MCF 10A (cell line): ENCODE measurements at regions of chr11 and their contacts with region 1.

Region 1: DNA sequence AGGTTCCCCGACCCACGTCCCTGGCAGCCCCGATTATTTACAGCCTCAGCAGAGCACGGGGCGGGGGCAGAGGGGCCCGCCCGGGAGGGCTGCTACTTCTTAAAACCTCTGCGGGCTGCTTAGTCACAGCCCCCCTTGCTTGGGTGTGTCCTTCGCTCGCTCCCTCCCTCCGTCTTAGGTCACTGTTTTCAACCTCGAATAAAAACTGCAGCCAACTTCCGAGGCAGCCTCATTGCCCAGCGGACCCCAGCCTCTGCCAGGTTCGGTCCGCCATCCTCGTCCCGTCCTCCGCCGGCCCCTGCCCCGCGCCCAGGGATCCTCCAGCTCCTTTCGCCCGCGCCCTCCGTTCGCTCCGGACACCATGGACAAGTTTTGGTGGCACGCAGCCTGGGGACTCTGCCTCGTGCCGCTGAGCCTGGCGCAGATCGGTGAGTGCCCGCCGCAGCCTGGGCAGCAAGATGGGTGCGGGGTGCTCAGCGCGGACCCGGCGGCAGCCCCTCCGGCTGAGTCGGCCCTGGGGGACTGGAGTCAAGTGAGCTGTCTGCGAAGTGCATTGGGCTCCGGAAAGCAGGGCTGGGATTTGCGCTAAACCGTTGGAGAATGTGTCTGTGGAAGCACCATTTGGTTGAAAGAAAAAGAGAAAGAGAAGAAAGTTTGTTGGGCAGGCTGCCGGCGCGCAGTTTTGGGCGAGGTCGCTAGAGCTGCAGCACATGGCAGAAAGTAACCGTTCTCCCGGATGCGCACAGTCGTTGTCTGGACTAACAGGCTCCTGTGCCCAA is at the start of gene CD44:
- DNase-seq: peak; percentile 78
- H3K4me3 Mint-ChIP-seq: peak within 1 kb of the TSS; percentile 98
- H3K27ac Mint-ChIP-seq: peak within 1 kb of the TSS; percentile 92
- H3K4me1 Mint-ChIP-seq: peaks cover 36% of the 10 kb centered on the region
- H3K27me3 Mint-ChIP-seq: no peaks in the 10 kb centered on the region
- CTCF ChIP-seq: no peak
- total RNA-seq, gene CD44: 323 and 446 TPM in 2 replicates

Region 2: GRCh38 chr11:35006389-35007128 is 132.6 kb before region 1 on chr11:
- CTCF ChIA-PET with region 1: interaction called, 5 read pairs
- POLR2A ChIA-PET with region 1: interaction called, 43 read pairs
- intact Hi-C with region 1: no loop called
- DNase-seq: no peak
- H3K4me3 Mint-ChIP-seq: no peak overlapping the region
- H3K27ac Mint-ChIP-seq: no peak overlapping the region
- H3K4me1 Mint-ChIP-seq: peaks cover 20% of the 10 kb centered on the region
- H3K27me3 Mint-ChIP-seq: no peaks in the 10 kb centered on the region
- CTCF ChIP-seq: no peak

Region 3: DNA sequence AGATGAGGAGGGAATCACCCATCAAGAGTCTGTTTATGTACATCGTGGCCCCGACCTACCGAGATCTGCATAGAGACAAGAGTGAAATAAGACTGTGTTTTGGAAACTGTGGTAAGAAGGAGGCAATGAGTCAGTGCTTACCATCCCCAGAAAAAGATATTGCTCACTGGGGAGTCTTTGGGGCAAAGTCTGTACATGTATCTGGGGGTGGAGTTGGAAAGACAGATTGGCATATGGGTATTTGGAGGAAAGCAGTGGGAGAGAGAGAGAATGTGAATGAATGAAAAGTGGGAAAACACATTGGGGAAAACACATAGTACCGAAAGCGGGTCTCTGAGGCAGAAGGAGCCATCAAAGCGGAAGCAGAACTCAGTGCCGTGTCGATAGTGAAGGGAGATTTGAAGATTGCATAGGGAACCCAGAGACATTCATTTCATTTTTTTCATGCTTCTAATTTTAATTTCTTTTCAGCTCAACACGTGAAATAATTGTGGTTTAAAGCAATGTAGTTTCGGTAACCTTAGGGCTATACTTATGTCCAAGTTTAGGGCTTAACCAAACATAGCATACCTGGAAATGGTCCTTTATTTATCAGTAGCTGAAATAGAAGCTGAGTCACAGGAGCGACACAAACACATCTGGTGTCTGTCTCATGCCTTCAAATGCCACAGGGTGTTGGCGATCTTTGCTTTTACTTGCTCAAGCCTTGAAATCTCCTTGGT is 98.8 kb before region 1 on chr11:
- CTCF ChIA-PET with region 1: no interaction called
- POLR2A ChIA-PET with region 1: interaction called, 10 read pairs
- intact Hi-C with region 1: loop called (anchors 2 kb)
- DNase-seq: peak; percentile 92
- H3K4me3 Mint-ChIP-seq: peak overlapping the region; percentile 69
- H3K27ac Mint-ChIP-seq: peak overlapping the region; percentile 86
- H3K4me1 Mint-ChIP-seq: peaks cover 29% of the 10 kb centered on the region
- H3K27me3 Mint-ChIP-seq: no peaks in the 10 kb centered on the region
- CTCF ChIP-seq: no peak

Region 4: GRCh38 chr11:35111161-35112055 is 27.7 kb before region 1 on chr11:
- CTCF ChIA-PET with region 1: interaction called, 3 read pairs
- POLR2A ChIA-PET with region 1: interaction called, 43 read pairs
- intact Hi-C with region 1: no loop called
- DNase-seq: peak; percentile 85
- H3K4me3 Mint-ChIP-seq: no peak overlapping the region
- H3K27ac Mint-ChIP-seq: peak overlapping the region; percentile 80
- H3K4me1 Mint-ChIP-seq: peaks cover 40% of the 10 kb centered on the region
- H3K27me3 Mint-ChIP-seq: no peaks in the 10 kb centered on the region
- CTCF ChIP-seq: no peak

Region 5: GRCh38 chr11:35153280-35153679 is 14.1 kb after region 1 on chr11:
- CTCF ChIA-PET with region 1: interaction called, 5 read pairs
- POLR2A ChIA-PET with region 1: interaction called, 233 read pairs
- intact Hi-C with region 1: no loop called
- DNase-seq: no peak
- H3K4me3 Mint-ChIP-seq: no peak overlapping the region
- H3K27ac Mint-ChIP-seq: peak overlapping the region; percentile 67
- H3K4me1 Mint-ChIP-seq: peaks cover 43% of the 10 kb centered on the region
- H3K27me3 Mint-ChIP-seq: no peaks in the 10 kb centered on the region
- CTCF ChIP-seq: no peak

Region 6: DNA sequence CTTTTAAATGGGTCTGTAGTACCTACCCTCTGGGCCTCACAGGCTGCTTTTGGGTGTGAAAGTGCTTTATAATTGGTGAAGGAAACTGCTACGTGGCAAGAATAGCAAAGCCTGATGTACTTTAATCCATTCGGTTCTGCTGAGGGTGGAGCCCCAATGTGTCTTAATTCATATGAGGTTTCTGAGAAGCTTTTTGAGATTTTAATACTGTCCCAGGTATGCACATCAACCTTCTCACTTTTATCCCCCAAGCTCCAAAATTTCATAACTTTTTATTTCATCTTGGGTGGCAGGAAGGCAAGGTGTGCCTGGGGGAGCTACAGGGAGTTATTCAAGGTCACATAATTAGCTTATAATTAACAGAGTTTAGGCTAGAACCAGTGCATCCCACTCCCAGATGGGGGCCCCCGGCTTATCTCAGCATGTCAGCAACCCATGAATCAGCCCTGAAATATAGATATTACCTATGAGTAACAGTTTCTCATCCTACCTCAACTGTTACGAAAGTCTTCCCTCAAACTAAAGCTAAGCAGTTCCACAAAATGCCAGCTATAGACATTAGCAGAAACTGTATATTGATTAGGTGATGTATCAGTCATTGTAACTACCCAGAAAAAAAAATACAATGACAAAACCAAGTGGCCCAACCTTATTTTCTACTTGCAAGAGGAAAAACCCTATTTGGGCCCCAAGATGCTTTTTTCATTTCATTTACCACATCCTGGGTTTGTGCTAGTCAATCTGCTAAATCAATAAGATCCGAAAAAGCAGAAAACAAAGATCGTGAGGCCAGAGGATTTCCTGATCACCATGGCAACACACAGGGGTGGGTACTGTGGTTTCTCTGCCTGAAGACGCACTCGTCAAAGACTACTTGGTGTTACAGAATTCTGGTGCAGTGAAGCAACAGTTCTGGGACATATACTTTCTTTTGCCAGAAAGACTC is 26.6 kb after region 1 on chr11:
- CTCF ChIA-PET with region 1: interaction called, 9 read pairs
- POLR2A ChIA-PET with region 1: interaction called, 233 read pairs
- intact Hi-C with region 1: loop called (anchors 2 kb)
- DNase-seq: peak; percentile 65
- H3K4me3 Mint-ChIP-seq: peak overlapping the region; percentile 54
- H3K27ac Mint-ChIP-seq: peak overlapping the region; percentile 94
- H3K4me1 Mint-ChIP-seq: peaks cover 46% of the 10 kb centered on the region
- H3K27me3 Mint-ChIP-seq: no peaks in the 10 kb centered on the region
- CTCF ChIP-seq: no peak

Region 7: GRCh38 chr11:35214792-35215193 is 75.7 kb after region 1 on chr11:
- CTCF ChIA-PET with region 1: no interaction called
- POLR2A ChIA-PET with region 1: no interaction called
- intact Hi-C with region 1: loop called (anchors 2 kb)
- DNase-seq: peak; percentile 71
- H3K4me3 Mint-ChIP-seq: no peak overlapping the region
- H3K27ac Mint-ChIP-seq: peak overlapping the region; percentile 82
- H3K4me1 Mint-ChIP-seq: peaks cover 27% of the 10 kb centered on the region
- H3K27me3 Mint-ChIP-seq: no peaks in the 10 kb centered on the region
- CTCF ChIP-seq: no peak